MCF 10A (cell line): ENCODE measurements at regions of chr6 and their contacts with region 1.

Region 1: GRCh38 chr6:36094753-36095496 is 35.4 kb upstream of the MAPK13 start:
- DNase-seq: peak; percentile 81
- H3K4me3 Mint-ChIP-seq: no peak overlapping the region
- H3K27ac Mint-ChIP-seq: peak overlapping the region; percentile 4
- H3K4me1 Mint-ChIP-seq: peaks cover 10% of the 10 kb centered on the region
- H3K27me3 Mint-ChIP-seq: no peaks in the 10 kb centered on the region
- CTCF ChIP-seq: peak; percentile 94

Region 2: GRCh38 chr6:35920793-35921732 is 173.9 kb before region 1 on chr6 and contains the start of gene SRPK1:
- CTCF ChIA-PET with region 1: interaction called, 7 read pairs
- POLR2A ChIA-PET with region 1: interaction called, 5 read pairs
- intact Hi-C with region 1: loop called (anchors 10 kb)
- DNase-seq: peak; percentile 88
- H3K4me3 Mint-ChIP-seq: peak within 1 kb of the TSS; percentile 99
- H3K27ac Mint-ChIP-seq: peak within 1 kb of the TSS; percentile 93
- H3K4me1 Mint-ChIP-seq: peaks cover 30% of the 10 kb centered on the region
- H3K27me3 Mint-ChIP-seq: no peaks in the 10 kb centered on the region
- CTCF ChIP-seq: no peak
- total RNA-seq, gene SRPK1: 80.7 and 83.9 TPM in 2 replicates

Region 3: DNA sequence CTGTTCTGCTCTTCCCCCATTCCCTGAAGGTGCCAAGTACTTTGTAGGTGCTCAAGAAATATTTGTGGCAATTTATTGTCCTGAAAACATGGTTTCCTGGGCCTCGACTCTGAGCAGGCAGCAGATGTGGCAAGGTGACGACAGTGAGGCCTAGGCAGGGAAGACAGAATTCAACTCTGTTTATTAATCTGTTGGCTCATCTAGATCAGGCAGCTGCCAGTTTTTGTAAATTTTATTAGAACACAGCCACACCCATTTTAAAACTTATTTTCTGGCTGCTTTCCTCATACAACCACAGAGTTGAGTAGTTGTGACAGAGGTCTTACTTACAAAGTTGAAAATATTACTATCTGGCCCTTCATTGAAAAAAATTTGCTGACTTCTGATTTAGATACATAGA is 42.8 kb before region 1 on chr6:
- CTCF ChIA-PET with region 1: interaction called, 13 read pairs
- POLR2A ChIA-PET with region 1: interaction called, 4 read pairs
- intact Hi-C with region 1: no loop called
- DNase-seq: no peak
- H3K4me3 Mint-ChIP-seq: no peak overlapping the region
- H3K27ac Mint-ChIP-seq: no peak overlapping the region
- H3K4me1 Mint-ChIP-seq: no peaks in the 10 kb centered on the region
- H3K27me3 Mint-ChIP-seq: no peaks in the 10 kb centered on the region
- CTCF ChIP-seq: no peak

Region 4: DNA sequence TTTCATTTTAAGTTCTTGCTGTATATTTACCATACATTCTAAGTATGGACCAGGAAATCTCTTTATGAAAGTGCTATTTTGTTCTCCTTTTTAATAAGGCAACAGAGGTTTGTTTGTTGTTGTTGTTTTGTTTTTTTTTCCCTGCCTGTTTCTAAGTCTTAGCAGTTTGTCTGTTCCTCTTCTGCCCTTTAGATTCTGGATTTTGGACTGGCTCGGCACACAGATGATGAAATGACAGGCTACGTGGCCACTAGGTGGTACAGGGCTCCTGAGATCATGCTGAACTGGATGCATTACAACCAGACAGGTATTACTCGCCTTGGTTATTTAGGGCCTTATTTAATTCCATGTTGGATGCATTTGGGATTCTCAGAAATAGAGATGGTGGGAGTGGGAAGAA is 19.3 kb before region 1 on chr6:
- CTCF ChIA-PET with region 1: interaction called, 44 read pairs
- POLR2A ChIA-PET with region 1: interaction called, 7 read pairs
- intact Hi-C with region 1: no loop called
- DNase-seq: peak; percentile 25
- H3K4me3 Mint-ChIP-seq: no peak overlapping the region
- H3K27ac Mint-ChIP-seq: peak overlapping the region; percentile 46
- H3K4me1 Mint-ChIP-seq: no peaks in the 10 kb centered on the region
- H3K27me3 Mint-ChIP-seq: no peaks in the 10 kb centered on the region
- CTCF ChIP-seq: peak; percentile 9

Region 5: DNA sequence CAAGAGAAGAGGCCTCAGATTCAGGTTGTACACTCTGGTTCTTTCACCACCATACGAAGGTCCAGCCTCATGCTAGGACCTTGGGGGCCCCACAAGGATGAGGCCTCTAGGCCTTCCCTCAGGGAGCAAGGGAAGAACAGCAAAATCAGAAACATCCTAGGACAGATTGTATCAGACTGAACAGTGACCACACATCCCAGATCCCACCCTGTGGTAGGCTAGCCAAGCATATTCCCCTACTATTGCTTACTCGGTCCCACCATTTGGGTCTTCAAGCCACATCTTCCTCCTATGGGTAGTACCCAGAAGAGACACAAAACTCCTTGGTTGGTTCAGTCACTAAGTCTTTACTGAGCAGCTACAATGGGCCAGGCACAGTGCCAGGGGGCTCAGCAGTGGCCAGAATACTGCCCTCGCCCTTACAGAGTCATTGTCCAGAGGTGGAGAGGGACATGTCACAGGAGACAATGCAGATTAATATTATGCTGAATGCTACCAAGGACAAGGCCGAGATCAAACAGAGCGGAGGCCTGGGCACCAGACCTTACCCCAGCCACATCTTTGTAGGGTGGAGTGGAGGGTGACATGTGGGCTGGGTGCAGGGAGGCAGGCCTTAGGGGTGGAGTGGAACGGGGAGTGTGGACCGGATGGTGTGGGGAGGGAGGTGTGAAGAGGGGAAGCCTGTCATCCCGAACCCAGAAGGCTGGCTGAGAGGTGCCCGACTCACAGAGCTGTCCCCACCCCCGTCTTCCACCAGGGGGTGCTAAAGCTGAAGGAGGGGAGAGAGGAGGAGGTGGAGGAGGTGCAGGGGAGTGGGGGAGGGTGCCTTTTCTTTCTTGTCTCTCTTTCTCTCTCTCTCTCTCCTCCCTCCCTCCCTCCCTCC is 28.6 kb after region 1 on chr6:
- CTCF ChIA-PET with region 1: interaction called, 13 read pairs
- POLR2A ChIA-PET with region 1: no interaction called
- intact Hi-C with region 1: no loop called
- DNase-seq: peak; percentile 92
- H3K4me3 Mint-ChIP-seq: no peak overlapping the region
- H3K27ac Mint-ChIP-seq: no peak overlapping the region
- H3K4me1 Mint-ChIP-seq: peaks cover 18% of the 10 kb centered on the region
- H3K27me3 Mint-ChIP-seq: no peaks in the 10 kb centered on the region
- CTCF ChIP-seq: peak; percentile 80

Region 6: GRCh38 chr6:36563237-36563927 is 468.5 kb after region 1 on chr6:
- CTCF ChIA-PET with region 1: no interaction called
- POLR2A ChIA-PET with region 1: no interaction called
- intact Hi-C with region 1: no loop called
- DNase-seq: no peak
- H3K4me3 Mint-ChIP-seq: no peak overlapping the region
- H3K27ac Mint-ChIP-seq: no peak overlapping the region
- H3K4me1 Mint-ChIP-seq: no peaks in the 10 kb centered on the region
- H3K27me3 Mint-ChIP-seq: no peaks in the 10 kb centered on the region
- CTCF ChIP-seq: no peak